CD4-positive, alpha-beta T cell (primary cell): ENCODE measurements at regions of chr22 and their contacts with region 1.

Region 1: DNA sequence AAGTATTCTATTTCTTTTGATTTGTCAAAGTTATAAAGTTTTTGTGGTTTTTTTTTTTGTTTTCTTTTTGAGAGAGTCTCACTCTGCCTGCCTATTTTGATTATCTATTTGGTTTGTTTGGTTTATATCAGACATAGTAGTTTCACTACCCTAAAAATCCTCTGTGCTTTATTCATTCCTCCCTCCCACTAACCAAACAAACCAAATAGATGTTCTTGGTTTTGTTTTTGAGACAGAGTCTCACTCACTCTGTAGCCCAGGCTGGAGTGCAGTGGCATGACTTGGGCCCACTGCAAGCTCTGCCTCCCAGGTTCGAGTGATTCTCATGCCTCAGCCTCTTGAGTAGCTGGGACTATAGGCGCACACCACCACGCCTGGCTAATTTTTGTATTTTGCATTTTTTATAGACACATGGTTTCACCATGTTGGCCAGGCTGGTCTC is 67.9 kb downstream of the ENTHD1 start:
- DNase-seq: no peak
- ATAC-seq: no peak
- H3K4me3 ChIP-seq: no peak overlapping the region
- H3K4me3 Mint-ChIP-seq: no peak overlapping the region
- H3K27ac ChIP-seq: no peak overlapping the region
- H3K27ac Mint-ChIP-seq: no peak overlapping the region
- H3K4me1 ChIP-seq: no peaks in the 10 kb centered on the region
- H3K4me1 Mint-ChIP-seq: peaks cover 2% of the 10 kb centered on the region
- H3K27me3 ChIP-seq: no peaks in the 10 kb centered on the region
- H3K27me3 Mint-ChIP-seq: peaks cover 3% of the 10 kb centered on the region
- CTCF ChIP-seq: no peak

Region 2: DNA sequence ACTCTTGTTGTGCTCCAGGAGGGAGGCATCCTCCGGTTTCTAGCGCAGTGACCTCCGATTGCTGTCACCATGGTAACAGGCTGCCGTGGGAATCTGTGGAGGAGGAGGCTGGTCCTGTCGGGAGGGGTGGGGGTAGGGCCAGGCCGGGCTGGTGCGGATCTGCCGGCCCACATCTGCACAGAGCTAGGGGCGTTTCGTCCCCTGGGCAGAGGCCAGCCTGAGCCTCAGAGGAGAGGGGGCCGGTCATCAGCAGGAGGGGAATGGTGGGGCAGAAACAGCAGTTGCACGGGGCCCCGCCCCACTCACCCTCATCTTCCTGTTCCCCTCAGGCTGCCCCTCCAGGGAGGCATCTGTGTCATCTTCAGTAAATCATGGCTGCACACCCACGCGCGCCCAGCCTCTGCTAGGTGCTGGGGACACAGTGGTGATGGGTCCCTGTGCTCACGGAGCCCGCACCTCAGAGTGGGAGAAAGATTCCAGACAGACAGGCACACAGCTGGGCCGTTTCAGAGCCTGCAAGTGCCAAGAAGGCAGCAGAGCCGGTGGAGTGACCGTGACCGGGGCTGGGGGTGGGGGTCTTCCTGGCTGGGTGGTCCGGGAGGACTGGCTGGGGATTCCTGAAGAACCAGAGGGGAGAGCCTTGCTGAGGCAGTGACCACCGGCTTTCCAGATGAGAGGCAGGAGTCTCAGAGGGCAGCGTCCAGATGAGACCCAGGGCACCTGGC is 134.6 kb before region 1 on chr22:
- CTCF ChIA-PET with region 1: no interaction called
- POLR2A ChIA-PET with region 1: no interaction called
- intact Hi-C with region 1: no loop called
- DNase-seq: peak in 1 of 14 experiments; percentile 24
- ATAC-seq: peak; percentile 60
- H3K4me3 ChIP-seq: no peak overlapping the region
- H3K4me3 Mint-ChIP-seq: no peak overlapping the region
- H3K27ac ChIP-seq: no peak overlapping the region
- H3K27ac Mint-ChIP-seq: no peak overlapping the region
- H3K4me1 ChIP-seq: peaks cover 7% of the 10 kb centered on the region
- H3K4me1 Mint-ChIP-seq: peaks cover 13% of the 10 kb centered on the region
- H3K27me3 ChIP-seq: peaks cover 11 to 13% of the 10 kb centered on the region in 2 experiments
- H3K27me3 Mint-ChIP-seq: peaks cover 34% of the 10 kb centered on the region
- CTCF ChIP-seq: no peak

Region 3: GRCh38 chr22:39839917-39840510 is 14.3 kb after region 1 on chr22:
- CTCF ChIA-PET with region 1: interaction called, 4 read pairs
- POLR2A ChIA-PET with region 1: no interaction called
- intact Hi-C with region 1: loop called in 1 of 2 experiments (anchors 1 kb)
- DNase-seq: peak in 4 of 14 experiments; percentile 26 to 39 (median 32)
- ATAC-seq: peak; percentile 54
- H3K4me3 ChIP-seq: no peak overlapping the region
- H3K4me3 Mint-ChIP-seq: no peak overlapping the region
- H3K27ac ChIP-seq: no peak overlapping the region
- H3K27ac Mint-ChIP-seq: no peak overlapping the region
- H3K4me1 ChIP-seq: no peaks in the 10 kb centered on the region
- H3K4me1 Mint-ChIP-seq: peaks cover 15% of the 10 kb centered on the region
- H3K27me3 ChIP-seq: no peaks in the 10 kb centered on the region
- H3K27me3 Mint-ChIP-seq: no peaks in the 10 kb centered on the region
- CTCF ChIP-seq: no peak